ENCODE measurements at regions of chr1 and their contacts with region 1.

Region 1: GRCh38 chr1:63362578-63362977 is 4.8 kb upstream of the ALG6 start:
- DNase-seq: no peak
- ATAC-seq: no peak
- H3K4me3 ChIP-seq: no peak overlapping the region
- H3K27ac ChIP-seq: no peak overlapping the region
- H3K4me1 ChIP-seq: peaks cover 3% of the 10 kb centered on the region
- H3K27me3 ChIP-seq: no peaks in the 10 kb centered on the region
- CTCF ChIP-seq: no peak

Region 2: DNA sequence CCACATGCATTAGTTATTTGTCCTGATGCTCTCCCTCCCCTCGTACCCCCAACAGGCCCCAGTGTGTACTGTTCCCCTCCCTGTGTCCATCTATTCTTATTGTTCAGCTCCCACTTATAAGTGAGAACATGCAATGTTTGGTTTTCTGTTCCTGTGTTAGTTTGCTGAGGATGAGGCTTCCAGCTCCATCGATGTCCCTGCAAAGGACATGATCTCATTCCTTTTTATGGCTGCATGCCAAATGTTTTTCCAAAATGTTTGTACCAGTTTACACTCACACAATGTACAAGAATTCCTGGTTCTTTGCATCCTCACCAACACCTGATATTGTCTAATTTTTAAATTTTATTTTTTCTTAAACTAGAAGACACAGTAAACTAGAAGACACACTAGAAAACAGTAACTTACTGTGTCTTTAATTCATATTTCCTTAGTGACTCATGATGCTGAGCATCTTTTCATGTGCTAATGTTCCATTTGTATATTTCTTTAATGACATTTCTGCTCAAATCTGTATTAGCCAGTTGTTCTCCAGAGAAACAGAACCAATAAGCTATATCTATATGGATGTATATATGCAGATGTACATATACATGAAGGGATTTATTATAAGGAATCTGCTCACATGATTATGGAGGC is 945.1 kb before region 1 on chr1:
- intact Hi-C with region 1: no loop called
- DNase-seq: no peak
- ATAC-seq: no peak
- H3K4me3 ChIP-seq: no peak overlapping the region
- H3K27ac ChIP-seq: no peak overlapping the region
- H3K4me1 ChIP-seq: no peaks in the 10 kb centered on the region
- H3K27me3 ChIP-seq: no peaks in the 10 kb centered on the region
- CTCF ChIP-seq: no peak

Region 3: DNA sequence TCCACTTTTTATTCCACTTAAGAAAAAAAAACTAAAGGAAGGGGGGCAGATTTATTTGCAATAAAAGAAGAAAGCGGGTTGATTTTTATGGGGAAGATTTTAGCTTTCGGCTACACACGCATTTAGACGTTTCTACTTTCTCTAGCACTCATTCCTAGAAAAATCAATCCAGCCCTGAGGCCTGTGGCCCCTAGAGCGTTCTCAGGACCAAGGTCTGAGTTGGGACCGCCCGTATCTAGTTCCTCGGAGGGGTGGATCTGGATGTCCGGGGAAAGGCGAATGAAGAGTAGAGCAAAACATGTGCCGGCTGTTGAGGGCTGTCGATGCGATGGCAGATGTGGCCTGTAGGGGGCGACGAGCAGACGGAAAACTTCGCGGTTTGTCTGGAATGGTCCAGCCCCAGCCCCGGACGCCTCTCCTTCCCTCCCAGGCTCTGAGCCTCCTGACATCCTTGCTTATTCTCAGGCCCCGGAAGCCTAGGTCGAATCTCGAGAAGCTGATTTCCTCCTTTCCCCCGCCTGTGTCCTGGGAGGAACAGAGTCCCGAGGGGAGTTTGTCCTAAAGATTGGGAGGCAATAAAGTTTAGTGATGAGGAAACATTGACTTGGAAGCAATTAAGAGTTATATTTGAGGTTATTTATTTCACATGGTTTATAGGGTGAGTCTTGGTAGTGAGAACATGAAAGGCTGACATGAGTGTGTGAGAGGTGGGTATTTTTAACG is 35.0 kb before region 1 on chr1:
- intact Hi-C with region 1: loop called in 1 of 2 experiments (anchors 1 kb)
- DNase-seq: peak; percentile 50 to 69
- ATAC-seq: peak; percentile 76 to 85 (median 82)
- H3K4me3 ChIP-seq: peak overlapping the region; percentile 12
- H3K27ac ChIP-seq: no peak overlapping the region
- H3K4me1 ChIP-seq: peaks cover 11% of the 10 kb centered on the region
- H3K27me3 ChIP-seq: peaks cover 3 to 99% (median 56%) of the 10 kb centered on the region in 3 donors
- CTCF ChIP-seq: peak; percentile 76

Measured in psoas muscle (tissue), 8 donors.